ENCODE measurements at regions of chr17 and their contacts with region 1.

Region 1: DNA sequence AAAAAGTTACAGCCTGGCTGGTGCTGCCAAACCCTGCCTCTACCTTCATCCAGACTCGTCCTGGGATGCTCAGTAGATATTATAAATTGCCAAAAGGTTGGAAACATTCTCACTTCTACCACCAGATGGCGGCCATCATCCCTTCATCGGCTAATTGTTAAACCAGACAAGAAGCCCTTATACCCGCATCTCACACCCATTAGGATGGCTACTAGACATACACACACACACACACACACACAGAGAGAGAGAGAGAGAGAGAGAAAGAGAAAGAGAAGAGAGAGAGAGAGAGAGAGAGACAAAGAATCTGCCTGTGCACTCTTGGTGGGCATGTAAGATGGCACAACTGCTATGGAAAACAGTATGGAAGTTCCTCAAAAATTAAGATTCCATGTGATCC is 15.0 kb upstream of the SCIMP start:
- DNase-seq: peak in 1 of 2 donors; percentile 61
- ATAC-seq: peak; percentile 50 to 69 (median 64)
- H3K4me3 ChIP-seq: no peak overlapping the region
- H3K27ac ChIP-seq: no peak overlapping the region
- H3K4me1 ChIP-seq: peaks cover 0 to 7% (median 0%) of the 10 kb centered on the region in 9 donors
- H3K27me3 ChIP-seq: no peaks in the 10 kb centered on the region
- CTCF ChIP-seq: peak; percentile 31 to 69 (median 64)

Region 2: GRCh38 chr17:5438716-5439445 is 189.3 kb after region 1 on chr17 and contains the start of gene C1QBP:
- intact Hi-C with region 1: loop called in 5 of 10 experiments (anchors 2 to 10 kb)
- DNase-seq: peak; percentile 92 to 93
- ATAC-seq: peak; percentile 96 to 98 (median 97)
- H3K4me3 ChIP-seq: peak within 1 kb of the TSS; percentile 56 to 97 (median 81)
- H3K27ac ChIP-seq: peak within 1 kb of the TSS in 9 of 10 donors; percentile 72 to 91 (median 82)
- H3K4me1 ChIP-seq: peaks cover 5 to 30% (median 20%) of the 10 kb centered on the region in 9 donors
- H3K27me3 ChIP-seq: no peaks in the 10 kb centered on the region
- CTCF ChIP-seq: peak; percentile 99 to 100 (median 100)
- total RNA-seq, gene C1QBP: 101 to 144 (median 137) TPM

Region 3: DNA sequence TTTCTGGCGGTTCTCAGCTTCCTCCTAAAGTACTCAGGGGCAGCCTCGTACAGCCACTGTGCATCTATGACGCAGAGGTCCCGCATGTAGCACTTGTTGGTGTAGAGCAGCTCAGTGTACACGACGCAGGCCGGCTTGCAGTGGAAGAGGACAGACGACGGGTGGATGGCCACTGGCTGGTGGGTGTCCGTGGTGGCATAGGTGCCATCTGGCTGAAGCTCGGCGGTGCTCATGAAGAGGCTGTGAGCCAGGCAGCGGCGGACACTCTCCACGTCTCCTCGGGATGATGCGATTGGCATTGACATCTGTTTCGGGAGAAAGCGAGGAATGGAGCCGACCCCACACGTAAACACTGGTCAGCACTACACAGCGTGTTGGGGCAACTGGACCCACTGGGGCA is 194.6 kb after region 1 on chr17:
- intact Hi-C with region 1: loop called in 5 of 10 experiments (anchors 2 to 10 kb)
- DNase-seq: no peak
- ATAC-seq: no peak
- H3K4me3 ChIP-seq: no peak overlapping the region
- H3K27ac ChIP-seq: no peak overlapping the region
- H3K4me1 ChIP-seq: peaks cover 0 to 8% (median 6%) of the 10 kb centered on the region in 9 donors
- H3K27me3 ChIP-seq: no peaks in the 10 kb centered on the region
- CTCF ChIP-seq: no peak

Region 4: GRCh38 chr17:6435968-6436367 is 1186.4 kb after region 1 on chr17:
- intact Hi-C with region 1: loop called in 1 of 10 experiments (anchors 10 kb)
- DNase-seq: peak; percentile 37 to 41
- ATAC-seq: peak; percentile 73 to 92 (median 90)
- H3K4me3 ChIP-seq: no peak overlapping the region
- H3K27ac ChIP-seq: no peak overlapping the region
- H3K4me1 ChIP-seq: no peaks in the 10 kb centered on the region
- H3K27me3 ChIP-seq: peaks cover 0 to 59% (median 38%) of the 10 kb centered on the region in 7 donors
- CTCF ChIP-seq: peak; percentile 58 to 84 (median 79)